ENCODE measurements at regions of chr10 and their contacts with region 1.

Region 1: GRCh38 chr10:31318854-31319601 is at the start of gene ZEB1:
- DNase-seq: peak; percentile 90 to 93 (median 91)
- ATAC-seq: peak; percentile 78
- H3K4me3 ChIP-seq: peak within 1 kb of the TSS; percentile 96
- H3K27ac ChIP-seq: peak within 1 kb of the TSS; percentile 100
- H3K4me1 ChIP-seq: no peaks in the 10 kb centered on the region
- H3K27me3 ChIP-seq: no peaks in the 10 kb centered on the region
- total RNA-seq, gene ZEB1: 64.9 to 72.8 (median 69.2) TPM

Region 2: DNA sequence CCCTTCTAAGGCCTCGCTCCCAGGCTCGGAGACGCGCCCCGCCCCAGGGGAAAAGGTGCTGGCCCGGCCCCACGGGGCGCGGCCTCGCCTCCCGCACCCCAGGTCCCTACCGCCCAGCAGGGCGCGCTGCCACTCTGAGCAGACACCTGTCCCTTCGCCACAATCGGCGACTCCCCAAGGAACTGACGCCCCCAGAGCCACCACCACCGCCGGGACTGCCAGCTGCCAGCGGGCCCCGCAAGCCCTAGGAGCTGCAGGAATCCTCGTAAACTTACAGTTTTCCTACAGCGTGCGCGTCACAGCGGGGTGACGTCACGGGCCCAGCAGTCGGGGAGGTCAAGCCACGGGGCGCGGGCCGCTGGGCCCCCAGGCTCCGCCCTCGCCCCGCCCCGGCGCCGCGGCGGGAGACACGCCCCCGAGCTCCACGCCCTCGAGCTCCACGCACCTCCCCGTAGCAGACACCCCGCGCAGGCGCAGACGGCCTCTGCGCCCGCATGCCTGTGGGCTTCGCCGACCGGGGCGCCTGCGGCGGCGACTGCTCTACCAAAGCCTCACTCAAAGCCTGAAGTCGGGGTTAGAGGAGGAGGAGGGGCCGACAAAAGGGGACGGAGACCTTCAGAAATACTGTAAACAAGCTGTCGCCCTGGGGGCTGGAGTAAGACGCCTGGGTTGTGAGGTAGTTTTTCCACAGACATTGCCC is 287.3 kb before region 1 on chr10 and contains the start of gene ZNF438:
- intact Hi-C with region 1: loop called in 1 of 4 experiments (anchors 5 kb)
- DNase-seq: peak; percentile 96 to 99 (median 99)
- ATAC-seq: peak; percentile 97 to 98
- H3K4me3 ChIP-seq: peak within 1 kb of the TSS; percentile 51
- H3K27ac ChIP-seq: peak within 1 kb of the TSS; percentile 98
- H3K4me1 ChIP-seq: peaks cover 8% of the 10 kb centered on the region
- H3K27me3 ChIP-seq: no peaks in the 10 kb centered on the region
- total RNA-seq, gene ZNF438: 15.2 to 17.1 (median 15.9) TPM

Region 3: GRCh38 chr10:31261511-31262311 is 57.3 kb before region 1 on chr10:
- intact Hi-C with region 1: no loop called
- DNase-seq: no peak
- ATAC-seq: peak in 1 of 2 donors; percentile 13
- H3K4me3 ChIP-seq: peak overlapping the region; percentile 1
- H3K27ac ChIP-seq: no peak overlapping the region
- H3K4me1 ChIP-seq: peaks cover 7% of the 10 kb centered on the region
- H3K27me3 ChIP-seq: no peaks in the 10 kb centered on the region

Measured in right cardiac atrium (tissue), 5 donors.